ENCODE measurements at regions of chr3 and their contacts with region 1.

Region 1: DNA sequence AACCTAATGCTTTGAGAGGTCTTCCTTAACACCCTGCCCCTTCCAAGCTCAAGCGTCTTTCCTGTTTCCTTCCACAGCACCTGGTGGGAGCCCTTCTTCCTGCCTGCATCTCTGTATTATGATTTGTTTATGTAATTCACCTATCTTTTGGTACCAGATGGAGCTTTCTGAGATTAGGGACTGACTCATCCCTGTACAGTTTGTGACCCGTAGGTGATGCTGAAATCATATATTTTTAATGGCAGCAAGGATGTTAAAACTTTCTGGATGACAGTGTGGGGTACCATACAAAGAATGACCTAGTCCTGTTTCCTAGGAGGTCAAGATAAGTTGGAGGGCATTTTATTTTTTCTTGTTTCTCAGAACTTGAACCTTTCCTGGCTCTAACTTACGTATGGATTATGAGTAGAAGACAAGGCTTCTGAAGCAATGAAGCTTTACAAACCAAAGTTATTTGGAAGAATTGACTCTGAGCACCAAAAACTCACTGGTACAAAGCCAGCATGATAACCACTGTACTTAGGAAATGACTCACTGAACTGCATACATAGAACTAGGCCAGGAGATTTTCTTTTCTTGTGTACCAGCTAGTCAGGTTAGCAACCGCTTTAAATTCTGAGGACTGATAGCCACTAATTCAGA is 46.6 kb downstream of the HHLA2 start:
- DNase-seq: no peak
- H3K4me3 Mint-ChIP-seq: peak overlapping the region; percentile 5
- H3K27ac Mint-ChIP-seq: peak overlapping the region; percentile 59
- H3K4me1 Mint-ChIP-seq: peaks cover 37% of the 10 kb centered on the region
- H3K27me3 Mint-ChIP-seq: peaks cover 4% of the 10 kb centered on the region

Region 2: GRCh38 chr3:108292905-108293328 is 50.0 kb before region 1 on chr3:
- intact Hi-C with region 1: loop called (anchors 1 kb)
- DNase-seq: no peak
- H3K4me3 Mint-ChIP-seq: peak overlapping the region; percentile 53
- H3K27ac Mint-ChIP-seq: peak overlapping the region; percentile 83
- H3K4me1 Mint-ChIP-seq: peaks cover 64% of the 10 kb centered on the region
- H3K27me3 Mint-ChIP-seq: peaks cover 2% of the 10 kb centered on the region

Region 3: GRCh38 chr3:108328821-108329486 is 14.0 kb before region 1 on chr3:
- intact Hi-C with region 1: loop called (anchors 2 kb)
- DNase-seq: no peak
- H3K4me3 Mint-ChIP-seq: peak overlapping the region; percentile 16
- H3K27ac Mint-ChIP-seq: peak overlapping the region; percentile 21
- H3K4me1 Mint-ChIP-seq: peaks cover 48% of the 10 kb centered on the region
- H3K27me3 Mint-ChIP-seq: no peaks in the 10 kb centered on the region

Region 4: GRCh38 chr3:108388136-108389132 is 45.5 kb after region 1 on chr3:
- intact Hi-C with region 1: loop called (anchors 1 kb)
- DNase-seq: no peak
- H3K4me3 Mint-ChIP-seq: no peak overlapping the region
- H3K27ac Mint-ChIP-seq: peak overlapping the region; percentile 50
- H3K4me1 Mint-ChIP-seq: peaks cover 24% of the 10 kb centered on the region
- H3K27me3 Mint-ChIP-seq: peaks cover 7% of the 10 kb centered on the region